ENCODE measurements at regions of chr4 and their contacts with region 1.

Region 1: GRCh38 chr4:129641179-129641578 is 545.2 kb downstream of the C4orf33 start:
- DNase-seq: peak in 5 of 6 donors; percentile 14 to 71 (median 46)
- ATAC-seq: peak in 3 of 4 donors; percentile 73 to 85 (median 84)
- H3K4me3 ChIP-seq: no peak overlapping the region
- H3K27ac ChIP-seq: no peak overlapping the region
- H3K4me1 ChIP-seq: no peaks in the 10 kb centered on the region
- H3K27me3 ChIP-seq: no peaks in the 10 kb centered on the region
- CTCF ChIP-seq: peak; percentile 61 to 87 (median 72)

Region 2: GRCh38 chr4:129362674-129363274 is 278.4 kb before region 1 on chr4:
- intact Hi-C with region 1: loop called (anchors 5 to 10 kb)
- DNase-seq: peak in 5 of 6 donors; percentile 40 to 60 (median 44)
- ATAC-seq: peak; percentile 71 to 93 (median 89)
- H3K4me3 ChIP-seq: no peak overlapping the region
- H3K27ac ChIP-seq: no peak overlapping the region
- H3K4me1 ChIP-seq: peaks cover 0 to 2% (median 0%) of the 10 kb centered on the region in 3 donors
- H3K27me3 ChIP-seq: no peaks in the 10 kb centered on the region
- CTCF ChIP-seq: peak; percentile 57 to 75 (median 74)

Measured in pancreas (tissue), 10 donors.